H1 (cell line): ENCODE measurements at regions of chr17 and their contacts with region 1.

Region 1: DNA sequence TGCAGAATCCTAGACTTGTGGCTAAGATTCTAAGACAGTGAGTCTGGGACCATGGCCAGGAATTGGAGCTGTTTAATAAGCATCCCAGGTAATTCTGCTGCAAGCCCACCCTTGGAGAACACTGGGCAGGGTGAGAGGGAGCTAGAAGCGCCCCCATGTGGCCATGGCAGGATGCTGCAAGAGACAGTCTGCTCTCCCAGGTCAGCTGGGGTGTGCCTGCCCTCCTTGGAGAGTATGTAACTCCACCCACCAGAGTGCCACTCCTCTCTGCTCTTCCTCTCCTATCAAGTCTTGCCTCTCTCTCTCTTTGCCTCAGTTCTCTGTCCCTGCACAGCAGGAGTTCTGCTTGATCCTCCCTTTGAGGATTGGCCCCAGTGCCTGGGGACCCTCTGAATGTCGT is 14.9 kb downstream of the RCVRN start:
- DNase-seq: peak; percentile 50 to 89
- H3K4me3 ChIP-seq: no peak overlapping the region
- H3K27ac ChIP-seq: no peak overlapping the region
- H3K4me1 ChIP-seq: 0 out of 7 replicates have a peak, but pooled peaks cover 0 to 3% (median 0%) of the 10 kb centered on the region in 4 experiments
- H3K27me3 ChIP-seq: no peaks in the 10 kb centered on the region
- CTCF ChIP-seq: peak; percentile 86 to 98 (median 97)
- EP300 ChIP-seq: no peak
- POLR2A ChIP-seq: no peak
- RAD21 ChIP-seq: peak; percentile 74 to 79

Region 2: GRCh38 chr17:9837551-9838471 is 52.3 kb before region 1 on chr17:
- CTCF ChIA-PET with region 1: interaction called, 10 read pairs
- POLR2A ChIA-PET with region 1: no interaction called
- DNase-seq: no peak
- H3K4me3 ChIP-seq: no peak overlapping the region
- H3K27ac ChIP-seq: no peak overlapping the region
- H3K4me1 ChIP-seq: peaks cover 0 to 4% (median 2%) of the 10 kb centered on the region in 4 experiments; a peak in 2 of 7 replicates
- H3K27me3 ChIP-seq: no peaks in the 10 kb centered on the region
- CTCF ChIP-seq: no peak
- EP300 ChIP-seq: no peak
- POLR2A ChIP-seq: no peak
- RAD21 ChIP-seq: no peak

Region 3: DNA sequence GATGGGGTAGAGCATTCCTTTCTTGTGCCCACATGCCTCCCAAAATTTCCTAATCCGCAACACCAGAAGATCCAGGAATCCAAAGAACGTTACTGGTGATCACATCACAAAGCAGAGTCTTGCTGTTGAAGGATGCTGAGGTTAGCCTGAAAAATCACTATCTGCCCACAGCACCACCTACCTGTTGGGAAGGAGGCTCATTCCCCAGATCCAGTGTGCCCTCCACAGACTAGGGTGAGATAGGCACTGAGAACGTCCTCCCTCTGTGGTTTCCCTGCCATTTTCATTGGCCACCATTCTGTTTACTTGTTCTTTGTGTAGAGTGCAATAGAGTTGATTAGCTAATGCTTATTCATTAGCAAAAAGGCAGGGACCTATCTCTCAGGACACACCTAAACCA is 15.4 kb before region 1 on chr17:
- CTCF ChIA-PET with region 1: interaction called, 26 read pairs
- POLR2A ChIA-PET with region 1: no interaction called
- DNase-seq: no peak
- H3K4me3 ChIP-seq: no peak overlapping the region
- H3K27ac ChIP-seq: no peak overlapping the region
- H3K4me1 ChIP-seq: no peaks in the 10 kb centered on the region
- H3K27me3 ChIP-seq: no peaks in the 10 kb centered on the region
- CTCF ChIP-seq: peak; percentile 16 to 55 (median 49); a peak in 2 of 4 replicates
- EP300 ChIP-seq: no peak
- POLR2A ChIP-seq: no peak
- RAD21 ChIP-seq: peak; percentile 19 to 25; a peak in 1 of 4 replicates

Region 4: GRCh38 chr17:9999919-10000695 is 110.0 kb after region 1 on chr17:
- CTCF ChIA-PET with region 1: no interaction called
- POLR2A ChIA-PET with region 1: no interaction called
- DNase-seq: no peak
- H3K4me3 ChIP-seq: no peak overlapping the region
- H3K27ac ChIP-seq: no peak overlapping the region
- H3K4me1 ChIP-seq: no peaks in the 10 kb centered on the region; a peak in 1 of 7 replicates
- H3K27me3 ChIP-seq: no peaks in the 10 kb centered on the region
- CTCF ChIP-seq: no peak
- EP300 ChIP-seq: no peak
- POLR2A ChIP-seq: no peak
- RAD21 ChIP-seq: no peak

Region 5: GRCh38 chr17:10010752-10011151 is 120.6 kb after region 1 on chr17:
- CTCF ChIA-PET with region 1: no interaction called
- POLR2A ChIA-PET with region 1: no interaction called
- DNase-seq: no peak
- H3K4me3 ChIP-seq: no peak overlapping the region
- H3K27ac ChIP-seq: no peak overlapping the region
- H3K4me1 ChIP-seq: peaks cover 0 to 2% (median 1%) of the 10 kb centered on the region in 4 experiments; a peak in 1 of 7 replicates
- H3K27me3 ChIP-seq: no peaks in the 10 kb centered on the region
- CTCF ChIP-seq: no peak
- EP300 ChIP-seq: no peak
- POLR2A ChIP-seq: no peak
- RAD21 ChIP-seq: no peak